ENCODE measurements at regions of chr6 and their contacts with region 1.

Region 1: DNA sequence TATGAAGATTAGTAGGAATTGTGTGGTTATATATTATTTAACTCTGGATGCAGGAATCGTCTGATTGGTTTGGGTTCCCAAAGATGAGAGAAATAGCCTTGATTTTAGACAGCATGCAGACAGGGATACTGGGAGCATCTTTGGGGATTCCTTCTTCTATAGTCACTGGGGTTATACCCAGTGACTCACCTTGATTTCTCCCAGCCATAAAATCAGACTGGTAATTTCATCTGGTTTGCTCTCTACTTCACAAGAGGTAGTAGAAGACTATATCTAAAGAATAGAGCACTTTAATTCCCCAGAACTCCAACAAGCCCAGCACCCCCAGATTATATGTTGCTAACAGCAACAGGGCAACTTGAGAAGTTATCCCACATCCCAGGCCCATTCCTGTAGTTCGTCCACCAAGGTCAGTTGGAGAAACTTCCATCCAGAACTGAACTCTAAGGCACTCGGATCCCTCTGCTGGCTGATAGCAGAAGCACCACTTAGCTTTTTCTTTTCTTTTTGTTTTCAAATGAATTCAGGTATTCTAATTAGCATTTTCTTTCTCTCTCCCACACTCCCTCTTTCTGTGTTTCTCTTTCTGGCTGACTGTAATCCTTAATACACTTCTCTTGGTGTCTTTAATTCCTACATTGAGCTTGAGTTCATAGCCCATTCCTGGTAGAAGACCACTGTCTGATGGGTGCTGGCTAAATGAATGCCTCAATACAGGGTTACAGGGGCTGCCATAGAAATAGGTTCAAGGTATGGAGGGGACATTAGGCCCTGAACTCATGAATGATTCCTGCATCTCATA is 20.4 kb upstream of the EFHC1 start:
- DNase-seq: peak in 13 of 35 experiments; percentile 14 to 74 (median 36)
- ATAC-seq: peak; percentile 23 to 62 (median 40)
- H3K4me3 ChIP-seq: no peak overlapping the region
- H3K4me3 Mint-ChIP-seq: peak overlapping the region in 2 of 3 donors; percentile 40 to 68
- H3K27ac ChIP-seq: peak overlapping the region; percentile 89
- H3K27ac Mint-ChIP-seq: peak overlapping the region; percentile 89 to 96
- H3K4me1 ChIP-seq: peaks cover 59 to 64% of the 10 kb centered on the region in 2 experiments
- H3K4me1 Mint-ChIP-seq: peaks cover 79 to 83% (median 82%) of the 10 kb centered on the region in 3 donors
- H3K27me3 ChIP-seq: no peaks in the 10 kb centered on the region
- H3K27me3 Mint-ChIP-seq: no peaks in the 10 kb centered on the region

Region 2: GRCh38 chr6:51116723-51117505 is 1282.8 kb before region 1 on chr6:
- CTCF ChIA-PET with region 1: no interaction called
- POLR2A ChIA-PET with region 1: no interaction called
- DNase-seq: no peak
- ATAC-seq: no peak
- H3K4me3 ChIP-seq: no peak overlapping the region
- H3K4me3 Mint-ChIP-seq: no peak overlapping the region
- H3K27ac ChIP-seq: no peak overlapping the region
- H3K27ac Mint-ChIP-seq: no peak overlapping the region
- H3K4me1 ChIP-seq: no peaks in the 10 kb centered on the region
- H3K4me1 Mint-ChIP-seq: no peaks in the 10 kb centered on the region
- H3K27me3 ChIP-seq: no peaks in the 10 kb centered on the region
- H3K27me3 Mint-ChIP-seq: no peaks in the 10 kb centered on the region

Region 3: GRCh38 chr6:52304983-52305390 is 94.7 kb before region 1 on chr6:
- CTCF ChIA-PET with region 1: interaction called in 1 of 2 experiments, 6 read pairs
- POLR2A ChIA-PET with region 1: interaction called in 1 of 2 experiments, 11 read pairs
- DNase-seq: peak in 1 of 35 experiments; percentile 39
- ATAC-seq: peak in 2 of 4 experiments; percentile 32 to 34
- H3K4me3 ChIP-seq: no peak overlapping the region
- H3K4me3 Mint-ChIP-seq: peak overlapping the region; percentile 51 to 65 (median 54)
- H3K27ac ChIP-seq: peak overlapping the region; percentile 86
- H3K27ac Mint-ChIP-seq: peak overlapping the region; percentile 95
- H3K4me1 ChIP-seq: peaks cover 40 to 66% of the 10 kb centered on the region in 2 experiments
- H3K4me1 Mint-ChIP-seq: peaks cover 76 to 87% (median 80%) of the 10 kb centered on the region in 3 donors
- H3K27me3 ChIP-seq: no peaks in the 10 kb centered on the region
- H3K27me3 Mint-ChIP-seq: no peaks in the 10 kb centered on the region

Region 4: GRCh38 chr6:52361945-52362442 is 37.7 kb before region 1 on chr6 and contains the start of gene PAQR8:
- CTCF ChIA-PET with region 1: interaction called, 6 to 14 read pairs
- POLR2A ChIA-PET with region 1: interaction called in 1 of 2 experiments, 5 read pairs
- DNase-seq: peak; percentile 60 to 91 (median 78)
- ATAC-seq: peak; percentile 91 to 96 (median 93)
- H3K4me3 ChIP-seq: peak within 1 kb of the TSS; percentile 93 to 98
- H3K4me3 Mint-ChIP-seq: peak within 1 kb of the TSS; percentile 94 to 97 (median 95)
- H3K27ac ChIP-seq: peak within 1 kb of the TSS; percentile 94
- H3K27ac Mint-ChIP-seq: peak within 1 kb of the TSS; percentile 94
- H3K4me1 ChIP-seq: peaks cover 15 to 21% of the 10 kb centered on the region in 2 experiments
- H3K4me1 Mint-ChIP-seq: peaks cover 42 to 49% (median 46%) of the 10 kb centered on the region in 3 donors
- H3K27me3 ChIP-seq: no peaks in the 10 kb centered on the region
- H3K27me3 Mint-ChIP-seq: no peaks in the 10 kb centered on the region
- total RNA-seq, gene PAQR8: 12.0 to 35.2 (median 30.2) TPM

Region 5: DNA sequence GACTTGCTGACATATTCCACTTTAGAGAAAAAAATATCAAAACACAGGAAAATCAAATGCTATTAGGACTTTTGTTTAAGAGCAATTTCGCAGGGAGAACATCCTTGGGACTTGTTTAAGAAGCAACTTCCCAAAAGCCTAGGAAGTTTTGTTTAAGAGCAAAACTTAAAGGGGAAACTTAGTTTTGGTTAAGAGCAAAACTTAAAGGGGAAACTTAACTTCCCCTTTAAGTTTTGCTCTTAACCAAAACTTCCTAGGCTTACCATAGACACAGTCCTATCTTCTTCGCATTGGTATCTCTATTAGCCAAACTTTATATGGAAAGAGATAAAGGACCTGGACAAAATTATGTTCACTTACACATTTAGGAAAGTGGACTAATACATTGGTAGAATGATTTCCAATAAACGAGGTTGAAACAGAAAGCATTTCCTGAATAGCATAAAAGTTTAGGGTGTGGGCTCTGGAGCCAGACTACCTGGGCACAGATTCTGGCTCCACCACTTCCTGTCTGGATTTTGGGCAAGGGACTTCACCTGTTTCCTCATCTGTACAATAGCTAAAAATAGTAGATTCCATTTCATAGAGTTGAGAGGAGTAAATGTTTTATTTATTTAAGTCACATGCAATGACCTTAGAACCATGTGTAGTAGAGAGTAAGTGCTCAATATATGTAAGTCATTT is 22.0 kb before region 1 on chr6:
- CTCF ChIA-PET with region 1: interaction called, 4 to 8 read pairs
- POLR2A ChIA-PET with region 1: interaction called, 6 to 10 read pairs
- DNase-seq: no peak
- ATAC-seq: peak in 3 of 4 experiments; percentile 14 to 53 (median 28)
- H3K4me3 ChIP-seq: no peak overlapping the region
- H3K4me3 Mint-ChIP-seq: peak overlapping the region; percentile 32 to 54 (median 52)
- H3K27ac ChIP-seq: no peak overlapping the region
- H3K27ac Mint-ChIP-seq: peak overlapping the region; percentile 86 to 93
- H3K4me1 ChIP-seq: peaks cover 35 to 47% of the 10 kb centered on the region in 2 experiments
- H3K4me1 Mint-ChIP-seq: peaks cover 77 to 80% (median 79%) of the 10 kb centered on the region in 3 donors
- H3K27me3 ChIP-seq: no peaks in the 10 kb centered on the region
- H3K27me3 Mint-ChIP-seq: no peaks in the 10 kb centered on the region

Region 6: GRCh38 chr6:52419809-52420670 is 20.3 kb after region 1 on chr6 and contains the start of gene EFHC1:
- CTCF ChIA-PET with region 1: interaction called, 4 to 17 read pairs
- POLR2A ChIA-PET with region 1: interaction called, 3 to 7 read pairs
- DNase-seq: peak; percentile 93 to 99 (median 96)
- ATAC-seq: peak; percentile 91 to 95 (median 94)
- H3K4me3 ChIP-seq: peak within 1 kb of the TSS; percentile 60 to 67
- H3K4me3 Mint-ChIP-seq: no peak within 1 kb of the TSS
- H3K27ac ChIP-seq: peak within 1 kb of the TSS; percentile 62
- H3K27ac Mint-ChIP-seq: peak within 1 kb of the TSS in 1 of 2 donors; percentile 66
- H3K4me1 ChIP-seq: peaks cover 7 to 17% of the 10 kb centered on the region in 2 experiments
- H3K4me1 Mint-ChIP-seq: peaks cover 15 to 20% (median 15%) of the 10 kb centered on the region in 3 donors
- H3K27me3 ChIP-seq: peaks cover 0 to 8% of the 10 kb centered on the region in 2 experiments
- H3K27me3 Mint-ChIP-seq: no peaks in the 10 kb centered on the region
- total RNA-seq, gene EFHC1: 4.5 to 8.6 (median 6.2) TPM

Region 7: GRCh38 chr6:52552278-52552643 is 152.5 kb after region 1 on chr6:
- CTCF ChIA-PET with region 1: no interaction called
- POLR2A ChIA-PET with region 1: no interaction called
- DNase-seq: no peak
- ATAC-seq: no peak
- H3K4me3 ChIP-seq: no peak overlapping the region
- H3K4me3 Mint-ChIP-seq: no peak overlapping the region
- H3K27ac ChIP-seq: no peak overlapping the region
- H3K27ac Mint-ChIP-seq: no peak overlapping the region
- H3K4me1 ChIP-seq: peaks cover 0 to 15% of the 10 kb centered on the region in 2 experiments
- H3K4me1 Mint-ChIP-seq: peaks cover 28 to 52% (median 35%) of the 10 kb centered on the region in 3 donors
- H3K27me3 ChIP-seq: no peaks in the 10 kb centered on the region
- H3K27me3 Mint-ChIP-seq: no peaks in the 10 kb centered on the region

Measured in T-cell (primary cell).